Activated CD4-positive, alpha-beta T cell treated with anti-CD3 and anti-CD28 coated beads for 36 hours (primary cell): ENCODE measurements at regions of chr6 and their contacts with region 1.

Region 1: GRCh38 chr6:15911753-15912504 is 217.0 kb upstream of the MYLIP start:
- DNase-seq: peak; percentile 74
- ATAC-seq: peak; percentile 85
- H3K4me3 Mint-ChIP-seq: no peak overlapping the region
- H3K27ac Mint-ChIP-seq: peak overlapping the region; percentile 2
- H3K4me1 Mint-ChIP-seq: peaks cover 40% of the 10 kb centered on the region
- H3K27me3 Mint-ChIP-seq: peaks cover 3% of the 10 kb centered on the region

Region 2: DNA sequence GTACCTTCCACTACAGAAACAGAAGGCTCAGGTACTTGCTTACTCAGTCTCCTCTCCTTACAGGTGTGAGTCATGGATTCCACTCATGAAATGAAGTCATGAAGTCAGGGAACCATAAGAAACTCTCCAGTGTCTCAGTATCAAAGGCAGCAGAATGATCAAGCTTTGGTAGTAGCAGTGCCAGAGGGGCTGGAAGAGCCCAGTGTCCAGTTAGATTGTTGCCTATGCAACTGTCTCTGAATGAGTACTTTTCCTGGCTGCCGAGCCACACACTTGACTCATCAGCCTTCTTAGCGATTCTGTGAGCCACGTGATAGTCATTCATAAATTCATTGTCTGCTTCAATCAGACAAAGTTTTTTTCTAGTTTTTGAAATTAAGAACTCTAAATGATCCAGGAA is 196.9 kb before region 1 on chr6:
- CTCF ChIA-PET with region 1: no interaction called
- POLR2A ChIA-PET with region 1: no interaction called
- intact Hi-C with region 1: loop called (anchors 1 to 10 kb)
- DNase-seq: peak; percentile 70
- ATAC-seq: peak; percentile 97
- H3K4me3 Mint-ChIP-seq: no peak overlapping the region
- H3K27ac Mint-ChIP-seq: peak overlapping the region; percentile 86
- H3K4me1 Mint-ChIP-seq: peaks cover 26% of the 10 kb centered on the region
- H3K27me3 Mint-ChIP-seq: peaks cover 6% of the 10 kb centered on the region

Region 3: GRCh38 chr6:15776458-15776980 is 135.4 kb before region 1 on chr6:
- CTCF ChIA-PET with region 1: interaction called, 3 read pairs
- POLR2A ChIA-PET with region 1: no interaction called
- intact Hi-C with region 1: loop called (anchors 1 kb)
- DNase-seq: peak; percentile 71
- ATAC-seq: peak; percentile 89
- H3K4me3 Mint-ChIP-seq: peak overlapping the region; percentile 59
- H3K27ac Mint-ChIP-seq: peak overlapping the region; percentile 92
- H3K4me1 Mint-ChIP-seq: peaks cover 73% of the 10 kb centered on the region
- H3K27me3 Mint-ChIP-seq: no peaks in the 10 kb centered on the region

Region 4: GRCh38 chr6:15841937-15842705 is 69.8 kb before region 1 on chr6:
- CTCF ChIA-PET with region 1: no interaction called
- POLR2A ChIA-PET with region 1: no interaction called
- intact Hi-C with region 1: no loop called
- DNase-seq: no peak
- ATAC-seq: no peak
- H3K4me3 Mint-ChIP-seq: no peak overlapping the region
- H3K27ac Mint-ChIP-seq: no peak overlapping the region
- H3K4me1 Mint-ChIP-seq: peaks cover 8% of the 10 kb centered on the region
- H3K27me3 Mint-ChIP-seq: peaks cover 8% of the 10 kb centered on the region

Region 5: GRCh38 chr6:15901141-15902115 is 10.5 kb before region 1 on chr6:
- CTCF ChIA-PET with region 1: interaction called, 7 read pairs
- POLR2A ChIA-PET with region 1: interaction called, 4 read pairs
- intact Hi-C with region 1: loop called (anchors 1 kb)
- DNase-seq: peak; percentile 59
- ATAC-seq: peak; percentile 96
- H3K4me3 Mint-ChIP-seq: peak overlapping the region; percentile 9
- H3K27ac Mint-ChIP-seq: peak overlapping the region; percentile 73
- H3K4me1 Mint-ChIP-seq: peaks cover 38% of the 10 kb centered on the region
- H3K27me3 Mint-ChIP-seq: peaks cover 2% of the 10 kb centered on the region

Region 6: DNA sequence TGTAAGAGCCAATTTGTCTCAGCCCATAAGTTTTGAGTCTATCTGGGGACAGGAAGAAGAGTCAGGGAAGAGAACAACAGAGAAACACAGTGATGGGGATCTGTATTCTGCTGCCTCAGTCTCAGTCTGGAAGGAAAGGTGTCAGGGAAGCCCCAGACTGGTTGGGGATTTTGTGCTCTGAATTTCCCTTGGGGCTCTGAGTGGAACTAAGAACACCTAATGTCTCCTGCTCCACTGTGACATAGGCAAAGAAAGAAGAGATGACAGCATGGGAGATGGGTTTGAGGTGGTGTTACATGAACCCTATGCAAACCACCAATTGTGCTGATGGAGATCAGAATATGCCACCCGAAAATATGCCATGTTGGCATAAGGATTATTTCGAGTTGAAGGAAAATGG is 77.5 kb after region 1 on chr6:
- CTCF ChIA-PET with region 1: no interaction called
- POLR2A ChIA-PET with region 1: no interaction called
- intact Hi-C with region 1: no loop called
- DNase-seq: peak; percentile 8
- ATAC-seq: peak; percentile 55
- H3K4me3 Mint-ChIP-seq: no peak overlapping the region
- H3K27ac Mint-ChIP-seq: no peak overlapping the region
- H3K4me1 Mint-ChIP-seq: peaks cover 12% of the 10 kb centered on the region
- H3K27me3 Mint-ChIP-seq: peaks cover 2% of the 10 kb centered on the region

Region 7: DNA sequence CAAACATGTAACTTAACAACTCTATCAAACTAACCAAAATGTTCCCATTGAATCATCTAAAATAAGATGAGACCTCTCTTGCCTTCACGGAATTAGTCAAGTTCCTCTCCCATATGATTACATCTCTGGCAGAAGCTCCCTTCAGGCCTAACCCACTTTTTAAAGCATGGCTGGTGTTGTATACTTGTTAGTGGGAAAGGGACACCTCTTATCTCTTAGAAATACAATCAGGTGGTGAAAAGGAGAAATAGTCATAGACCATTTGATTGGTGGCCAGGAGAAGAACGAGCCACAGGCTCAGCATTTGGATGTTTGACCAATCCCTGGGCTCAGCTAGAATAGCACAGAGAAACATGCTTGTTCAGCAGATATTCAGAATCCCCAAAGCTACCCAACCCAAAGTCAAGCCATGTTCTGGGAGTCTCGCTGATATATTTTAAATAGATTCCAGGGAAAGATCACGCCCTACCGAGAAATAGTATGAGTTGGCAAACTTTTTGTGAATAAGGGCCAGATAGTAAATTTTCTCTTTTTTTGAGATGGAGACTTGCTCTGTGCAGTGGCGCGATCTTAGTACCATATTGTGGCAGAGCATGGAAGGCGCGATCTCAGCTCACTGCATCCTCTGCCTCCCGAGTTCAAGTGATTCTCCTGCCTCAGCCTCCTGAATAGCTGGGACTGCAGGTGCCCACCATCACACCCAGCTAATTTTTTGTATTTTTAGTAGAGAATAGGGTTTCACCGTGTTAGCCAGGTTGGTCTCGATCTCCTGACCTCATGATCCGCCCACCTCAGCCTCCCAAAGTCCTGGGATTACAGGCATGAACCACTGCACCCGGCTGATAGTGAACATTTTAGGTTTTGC is 90.6 kb after region 1 on chr6:
- CTCF ChIA-PET with region 1: no interaction called
- POLR2A ChIA-PET with region 1: no interaction called
- intact Hi-C with region 1: no loop called
- DNase-seq: no peak
- ATAC-seq: no peak
- H3K4me3 Mint-ChIP-seq: no peak overlapping the region
- H3K27ac Mint-ChIP-seq: no peak overlapping the region
- H3K4me1 Mint-ChIP-seq: no peaks in the 10 kb centered on the region
- H3K27me3 Mint-ChIP-seq: peaks cover 14% of the 10 kb centered on the region

Region 8: GRCh38 chr6:16128759-16129622 is 217.1 kb after region 1 on chr6 and contains the start of gene MYLIP:
- CTCF ChIA-PET with region 1: no interaction called
- POLR2A ChIA-PET with region 1: interaction called, 3 read pairs
- intact Hi-C with region 1: loop called (anchors 2 kb)
- DNase-seq: peak; percentile 98
- ATAC-seq: peak; percentile 82
- H3K4me3 Mint-ChIP-seq: peak within 1 kb of the TSS; percentile 90
- H3K27ac Mint-ChIP-seq: peak within 1 kb of the TSS; percentile 86
- H3K4me1 Mint-ChIP-seq: peaks cover 24% of the 10 kb centered on the region
- H3K27me3 Mint-ChIP-seq: no peaks in the 10 kb centered on the region
- total RNA-seq, gene MYLIP: 9.2 to 10.6 TPM

Region 9: GRCh38 chr6:17015144-17015543 is 1103.2 kb after region 1 on chr6:
- CTCF ChIA-PET with region 1: no interaction called
- POLR2A ChIA-PET with region 1: no interaction called
- intact Hi-C with region 1: loop called in 1 of 2 experiments (anchors 10 kb)
- DNase-seq: peak; percentile 47
- ATAC-seq: peak; percentile 92
- H3K4me3 Mint-ChIP-seq: peak overlapping the region; percentile 36
- H3K27ac Mint-ChIP-seq: peak overlapping the region; percentile 38
- H3K4me1 Mint-ChIP-seq: peaks cover 17% of the 10 kb centered on the region
- H3K27me3 Mint-ChIP-seq: peaks cover 27% of the 10 kb centered on the region